ENCODE measurements at regions of chr1 and their contacts with region 1.

Region 1: DNA sequence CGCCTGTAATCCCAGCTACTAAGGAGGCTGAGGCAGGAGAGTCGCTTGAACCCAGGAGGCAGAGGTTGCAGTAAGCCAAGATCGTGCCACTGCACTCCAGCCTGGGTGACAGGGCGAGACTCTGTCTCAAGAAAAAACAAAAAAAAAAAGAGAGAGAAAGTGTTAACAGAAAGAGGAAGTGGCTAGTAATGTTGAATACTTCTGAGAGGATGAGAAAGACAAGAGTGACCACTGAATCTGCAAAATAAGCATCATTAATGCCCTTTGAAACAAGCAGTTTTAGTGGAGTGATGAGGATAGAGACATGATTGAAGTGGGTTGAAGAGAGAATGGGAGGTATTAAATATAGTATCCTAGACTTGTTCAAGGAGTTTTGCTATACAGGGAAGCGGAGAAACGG is 11.7 kb downstream of the MPZ start:
- DNase-seq: no peak
- ATAC-seq: no peak
- H3K4me3 Mint-ChIP-seq: no peak overlapping the region
- H3K27ac Mint-ChIP-seq: no peak overlapping the region
- H3K4me1 Mint-ChIP-seq: peaks cover 2% of the 10 kb centered on the region
- H3K27me3 Mint-ChIP-seq: no peaks in the 10 kb centered on the region

Region 2: GRCh38 chr1:161282991-161283390 is 15.1 kb before region 1 on chr1:
- CTCF ChIA-PET with region 1: interaction called, 10 read pairs
- POLR2A ChIA-PET with region 1: no interaction called
- intact Hi-C with region 1: no loop called
- DNase-seq: no peak
- ATAC-seq: no peak
- H3K4me3 Mint-ChIP-seq: no peak overlapping the region
- H3K27ac Mint-ChIP-seq: no peak overlapping the region
- H3K4me1 Mint-ChIP-seq: no peaks in the 10 kb centered on the region
- H3K27me3 Mint-ChIP-seq: no peaks in the 10 kb centered on the region

Region 3: GRCh38 chr1:161420763-161421455 is 122.8 kb after region 1 on chr1:
- CTCF ChIA-PET with region 1: no interaction called
- POLR2A ChIA-PET with region 1: no interaction called
- intact Hi-C with region 1: no loop called
- DNase-seq: peak; percentile 17
- ATAC-seq: no peak
- H3K4me3 Mint-ChIP-seq: peak overlapping the region; percentile 73
- H3K27ac Mint-ChIP-seq: no peak overlapping the region
- H3K4me1 Mint-ChIP-seq: peaks cover 6% of the 10 kb centered on the region
- H3K27me3 Mint-ChIP-seq: peaks cover 7% of the 10 kb centered on the region

Measured in activated CD4-positive, alpha-beta T cell treated with anti-CD3 and anti-CD28 coated beads for 36 hours (primary cell).